Endothelial cell of umbilical vein (primary cell): ENCODE measurements at regions of chr7 and their contacts with region 1.

Region 1: GRCh38 chr7:106176414-106177299 is 64.5 kb upstream of the SYPL1 start:
- DNase-seq: peak; percentile 89
- H3K4me3 ChIP-seq: no peak overlapping the region
- H3K27ac ChIP-seq: no peak overlapping the region
- H3K4me1 ChIP-seq: no peaks in the 10 kb centered on the region
- H3K27me3 ChIP-seq: no peaks in the 10 kb centered on the region
- CTCF ChIP-seq: peak; percentile 94 to 96
- POLR2A ChIP-seq: no peak

Region 2: DNA sequence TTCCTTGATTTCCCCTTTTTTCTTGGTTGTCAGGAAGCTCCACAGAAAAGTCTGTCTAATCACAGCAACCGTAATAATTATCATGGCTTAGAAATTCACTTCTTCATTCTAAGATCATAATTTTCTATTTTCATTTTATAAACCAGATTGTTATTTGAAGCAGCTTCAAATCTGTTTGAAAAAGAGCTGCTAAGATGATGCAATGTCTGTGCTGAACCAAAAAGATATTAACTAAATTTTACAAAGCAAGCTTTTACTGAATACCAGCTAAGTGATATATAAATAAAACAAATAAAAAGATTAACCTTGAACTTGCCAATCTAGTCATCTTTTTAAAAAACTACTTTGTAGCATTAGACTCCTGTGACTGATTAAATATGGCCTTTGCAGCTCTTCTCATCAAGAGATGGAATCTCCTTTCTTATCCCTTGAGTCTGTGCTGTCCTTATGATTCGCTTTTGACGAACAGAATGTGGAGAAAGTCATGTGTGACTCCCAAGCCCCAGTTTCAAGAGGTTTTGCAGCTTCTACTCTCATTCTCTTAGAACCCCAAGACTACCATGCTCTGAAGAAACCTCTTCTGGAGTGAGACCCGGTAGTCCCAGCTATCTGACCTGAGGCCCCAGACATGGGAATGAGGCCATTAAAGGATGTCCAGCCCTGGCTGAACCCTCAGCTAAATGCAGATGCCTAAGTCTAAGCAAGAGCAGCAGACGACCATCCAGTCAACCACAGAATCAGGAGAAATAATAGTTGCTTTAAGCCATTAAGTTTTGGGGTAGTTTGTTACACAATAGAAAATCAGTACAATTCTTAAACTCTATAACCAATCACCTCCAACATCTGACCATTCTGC is 93.7 kb after region 1 on chr7:
- CTCF ChIA-PET with region 1: interaction called, 29 read pairs
- POLR2A ChIA-PET with region 1: no interaction called
- dilution Hi-C with region 1: no loop called
- intact Hi-C with region 1: no loop called
- DNase-seq: no peak
- H3K4me3 ChIP-seq: no peak overlapping the region
- H3K27ac ChIP-seq: no peak overlapping the region
- H3K4me1 ChIP-seq: no peaks in the 10 kb centered on the region
- H3K27me3 ChIP-seq: no peaks in the 10 kb centered on the region
- CTCF ChIP-seq: no peak
- POLR2A ChIP-seq: no peak

Region 3: DNA sequence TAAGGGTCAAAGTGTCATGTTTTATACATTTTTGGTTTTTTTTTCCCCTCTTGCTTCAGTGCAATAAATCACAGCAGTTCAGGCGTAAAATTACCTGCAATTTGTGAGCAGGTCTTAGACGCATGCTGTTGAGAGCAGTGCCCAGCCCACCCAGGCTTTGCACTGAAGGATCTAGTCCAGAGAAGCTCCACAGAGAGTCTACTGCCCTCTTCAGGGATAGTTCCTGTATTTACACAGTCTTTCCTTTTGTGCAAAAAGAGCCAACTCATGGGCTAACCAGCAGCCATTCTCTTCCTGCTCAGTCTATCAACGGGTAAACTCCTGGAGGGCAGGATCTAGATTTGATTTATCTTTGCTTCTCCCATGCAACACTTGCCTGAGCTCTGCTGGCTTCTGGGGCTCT is 190.4 kb after region 1 on chr7:
- CTCF ChIA-PET with region 1: interaction called, 12 read pairs
- POLR2A ChIA-PET with region 1: no interaction called
- dilution Hi-C with region 1: no loop called
- intact Hi-C with region 1: loop called (anchors 1 kb)
- DNase-seq: peak; percentile 15
- H3K4me3 ChIP-seq: no peak overlapping the region
- H3K27ac ChIP-seq: no peak overlapping the region
- H3K4me1 ChIP-seq: no peaks in the 10 kb centered on the region
- H3K27me3 ChIP-seq: peaks cover 0 to 2% of the 10 kb centered on the region in 2 experiments
- CTCF ChIP-seq: peak; percentile 23 to 36
- POLR2A ChIP-seq: no peak

Region 4: DNA sequence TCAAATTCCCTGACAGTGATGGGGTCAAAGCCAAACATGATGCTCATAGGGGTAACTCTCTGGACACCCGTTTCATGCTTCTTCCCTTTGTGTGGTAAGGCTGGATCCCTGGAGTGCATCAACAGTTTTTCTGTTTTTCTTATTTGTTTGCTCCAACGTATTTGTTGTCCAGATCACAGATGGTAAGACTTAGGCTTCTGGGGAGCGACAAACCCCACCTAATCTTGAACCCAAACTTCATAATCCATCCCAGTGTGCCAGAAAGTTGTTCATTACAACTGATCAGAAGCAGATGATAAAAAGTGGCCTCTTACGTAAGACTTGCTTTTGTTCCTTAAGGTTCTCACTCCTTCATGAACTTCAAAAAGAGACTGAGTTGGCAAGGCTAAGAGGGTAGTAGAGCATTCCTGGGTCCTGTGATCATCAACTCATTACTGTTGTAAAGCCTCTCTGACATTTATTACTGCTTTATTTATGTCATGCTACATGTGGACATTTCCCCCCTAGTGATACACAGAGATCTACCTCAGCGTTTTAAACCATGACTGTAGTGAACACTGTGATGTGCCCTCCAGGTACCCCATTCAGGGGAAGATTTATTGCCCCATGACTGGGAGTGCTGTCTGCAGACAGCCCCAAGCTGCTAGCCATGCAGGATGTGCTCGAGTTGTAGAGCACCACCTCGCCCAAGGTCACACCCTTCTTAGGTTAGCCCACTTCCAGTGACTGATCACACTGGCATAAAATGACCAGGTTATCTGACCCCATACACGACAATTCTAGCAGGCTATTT is 358.8 kb after region 1 on chr7:
- CTCF ChIA-PET with region 1: interaction called, 28 read pairs
- POLR2A ChIA-PET with region 1: interaction called, 4 read pairs
- dilution Hi-C with region 1: no loop called
- intact Hi-C with region 1: no loop called
- DNase-seq: no peak
- H3K4me3 ChIP-seq: no peak overlapping the region
- H3K27ac ChIP-seq: no peak overlapping the region
- H3K4me1 ChIP-seq: peaks cover 34% of the 10 kb centered on the region
- H3K27me3 ChIP-seq: no peaks in the 10 kb centered on the region
- CTCF ChIP-seq: no peak
- POLR2A ChIP-seq: no peak

Region 5: DNA sequence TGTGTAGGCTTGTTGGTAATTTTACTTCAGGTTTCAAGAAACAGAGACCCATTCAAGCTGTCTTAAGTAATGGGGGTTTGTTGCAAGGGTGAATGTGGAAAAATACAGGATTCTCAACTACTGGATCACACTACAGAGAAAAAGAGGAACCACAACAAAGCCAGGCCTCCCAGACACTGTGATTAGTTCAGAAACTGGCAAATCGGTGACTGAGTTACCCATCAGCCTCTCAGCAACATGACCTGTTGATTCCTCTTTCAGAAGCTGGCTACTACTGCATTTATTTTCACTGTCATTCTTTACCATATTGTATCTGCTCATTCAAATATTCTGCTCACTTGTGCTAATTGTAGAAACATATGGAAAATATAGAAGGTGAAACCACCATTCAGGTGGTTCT is 468.3 kb after region 1 on chr7:
- CTCF ChIA-PET with region 1: interaction called, 13 read pairs
- POLR2A ChIA-PET with region 1: no interaction called
- dilution Hi-C with region 1: no loop called
- intact Hi-C with region 1: no loop called
- DNase-seq: no peak
- H3K4me3 ChIP-seq: no peak overlapping the region
- H3K27ac ChIP-seq: no peak overlapping the region
- H3K4me1 ChIP-seq: peaks cover 12% of the 10 kb centered on the region
- H3K27me3 ChIP-seq: no peaks in the 10 kb centered on the region
- CTCF ChIP-seq: no peak
- POLR2A ChIP-seq: no peak

Region 6: DNA sequence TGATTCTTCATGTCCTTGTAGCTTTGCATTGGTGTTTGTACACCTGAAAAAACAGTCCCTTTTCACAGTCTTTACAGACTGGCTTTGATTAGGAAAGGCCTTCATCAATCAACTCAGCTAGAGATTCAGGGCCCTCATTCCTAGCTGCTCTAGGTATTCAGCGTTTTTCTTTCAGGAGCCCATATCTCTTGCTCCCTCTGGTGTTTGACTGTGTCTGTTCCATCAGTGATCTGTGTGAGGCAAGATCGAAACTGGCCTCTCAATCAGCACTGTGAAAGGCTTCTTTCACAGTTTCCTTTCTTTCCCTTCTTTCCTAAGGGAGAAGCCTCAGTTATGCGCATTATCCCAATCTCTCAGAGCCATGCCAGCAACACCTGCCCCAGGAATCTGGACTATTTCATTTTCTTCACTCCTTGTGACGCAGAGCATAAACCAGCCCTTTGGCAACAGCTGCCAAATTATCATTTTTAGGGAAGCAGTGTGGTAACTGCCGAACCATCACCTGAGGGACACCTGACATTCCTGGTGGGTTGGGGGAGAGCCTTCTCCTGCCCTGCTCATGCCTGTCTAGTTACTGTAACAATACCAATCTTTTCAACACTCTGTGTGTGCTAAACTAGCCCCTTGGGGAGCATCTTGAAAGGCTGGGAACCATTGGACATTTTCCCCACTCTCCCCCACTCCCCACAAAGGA is 560.0 kb after region 1 on chr7:
- CTCF ChIA-PET with region 1: interaction called, 106 read pairs
- POLR2A ChIA-PET with region 1: no interaction called
- dilution Hi-C with region 1: no loop called
- intact Hi-C with region 1: loop called (anchors 1 kb)
- DNase-seq: peak; percentile 84
- H3K4me3 ChIP-seq: no peak overlapping the region
- H3K27ac ChIP-seq: peak overlapping the region; percentile 37
- H3K4me1 ChIP-seq: peaks cover 18% of the 10 kb centered on the region
- H3K27me3 ChIP-seq: no peaks in the 10 kb centered on the region
- CTCF ChIP-seq: peak; percentile 65 to 74
- POLR2A ChIP-seq: no peak

Region 7: DNA sequence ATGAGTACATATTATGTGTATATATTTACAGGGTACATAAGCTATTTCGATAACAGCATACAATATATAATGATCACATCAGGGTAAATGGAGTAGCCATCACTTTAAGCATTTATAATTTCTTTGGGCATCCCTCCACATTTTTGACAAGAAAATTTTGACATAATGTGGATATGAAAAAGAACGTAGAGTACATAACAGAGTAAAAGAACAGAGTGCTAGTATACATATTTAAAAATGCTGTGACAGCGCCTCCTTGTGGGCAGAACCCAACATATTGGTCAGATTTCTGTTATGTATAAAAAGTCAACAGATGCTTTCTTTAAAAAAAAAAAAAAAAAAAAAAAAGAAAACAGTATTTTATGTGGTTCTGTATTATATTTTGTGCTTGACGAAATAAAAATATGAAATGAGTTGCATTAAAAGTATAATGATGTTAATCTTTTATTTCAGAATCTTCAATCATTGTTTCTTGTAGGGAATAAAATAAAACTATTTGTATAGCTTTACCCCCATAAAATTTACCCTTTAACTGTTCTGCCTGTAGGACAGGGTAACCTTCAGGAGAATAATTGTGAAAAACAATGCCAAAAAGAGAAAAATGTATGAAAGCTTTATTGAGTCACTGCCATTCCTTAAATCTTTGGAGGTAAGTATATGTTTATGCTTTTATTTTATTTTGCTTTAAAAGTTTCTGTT is 973.9 kb after region 1 on chr7:
- CTCF ChIA-PET with region 1: interaction called, 35 read pairs
- POLR2A ChIA-PET with region 1: no interaction called
- dilution Hi-C with region 1: no loop called
- intact Hi-C with region 1: loop called (anchors 1 kb)
- DNase-seq: peak; percentile 89
- H3K4me3 ChIP-seq: no peak overlapping the region
- H3K27ac ChIP-seq: peak overlapping the region; percentile 20
- H3K4me1 ChIP-seq: peaks cover 13% of the 10 kb centered on the region
- H3K27me3 ChIP-seq: no peaks in the 10 kb centered on the region
- CTCF ChIP-seq: peak; percentile 28 to 35
- POLR2A ChIP-seq: no peak